Activated CD8-positive, alpha-beta T cell treated with anti-CD3 and anti-CD28 coated beads for 36 hours (primary cell): ENCODE measurements at regions of chr3 and their contacts with region 1.

Region 1: DNA sequence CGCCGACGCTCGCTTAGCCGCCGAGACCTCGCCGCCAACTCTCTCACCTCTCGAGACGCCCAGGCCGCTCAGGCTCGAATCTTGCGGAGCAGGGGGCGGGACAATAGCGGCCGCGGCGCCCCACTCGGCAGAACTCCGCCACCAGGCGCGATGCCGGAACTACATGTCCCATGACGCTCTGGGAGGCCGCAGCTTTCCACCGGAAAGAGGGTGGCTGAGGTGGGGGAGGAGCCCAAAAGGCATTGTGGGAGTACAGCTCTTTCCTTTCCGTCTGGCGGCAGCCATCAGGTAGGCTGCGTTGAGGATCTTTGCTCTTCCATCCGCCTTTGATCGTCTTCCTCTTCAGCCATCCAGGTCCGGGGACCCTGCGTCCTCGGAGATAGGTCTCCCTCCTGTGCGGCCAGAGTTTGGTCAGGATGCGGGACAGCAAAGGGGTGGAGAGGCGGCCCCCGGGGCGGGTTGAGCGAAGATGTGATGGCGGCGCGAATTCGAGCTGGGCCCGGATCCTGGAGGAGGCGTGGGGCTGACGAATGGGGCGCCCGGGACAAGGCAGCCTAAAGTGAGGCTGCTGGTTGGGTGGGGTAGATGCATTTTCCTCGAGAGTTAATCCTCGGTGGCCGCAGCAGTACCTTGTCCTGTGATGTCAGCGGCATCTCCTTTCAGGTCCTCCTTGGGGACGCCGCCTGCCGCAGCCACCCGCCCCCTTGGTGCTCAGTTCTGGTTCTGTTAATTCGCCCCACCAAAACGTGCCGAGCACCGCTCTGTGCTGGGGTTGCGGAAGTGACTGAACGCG is at the starts of genes NKIRAS1 and RPL15:
- DNase-seq: peak; percentile 98
- ATAC-seq: peak; percentile 96
- H3K4me3 Mint-ChIP-seq: peak within 1 kb of the TSS; percentile 99
- H3K27ac Mint-ChIP-seq: peak within 1 kb of the TSS; percentile 99
- H3K4me1 Mint-ChIP-seq: peaks cover 38% of the 10 kb centered on the region
- H3K27me3 Mint-ChIP-seq: peaks cover 2% of the 10 kb centered on the region
- CTCF ChIP-seq: peak; percentile 64
- total RNA-seq, gene NKIRAS1: 3.6 to 3.9 TPM
- total RNA-seq, gene RPL15: 2,671 to 2,747 TPM

Region 2: GRCh38 chr3:23805633-23806533 is 111.2 kb before region 1 on chr3 and contains the start of gene UBE2E1:
- CTCF ChIA-PET with region 1: no interaction called
- POLR2A ChIA-PET with region 1: interaction called, 37 read pairs
- intact Hi-C with region 1: loop called (anchors 10 kb)
- DNase-seq: peak; percentile 76
- ATAC-seq: peak; percentile 67
- H3K4me3 Mint-ChIP-seq: peak within 1 kb of the TSS; percentile 87
- H3K27ac Mint-ChIP-seq: peak within 1 kb of the TSS; percentile 94
- H3K4me1 Mint-ChIP-seq: peaks cover 43% of the 10 kb centered on the region
- H3K27me3 Mint-ChIP-seq: peaks cover 8% of the 10 kb centered on the region
- CTCF ChIP-seq: no peak
- total RNA-seq, gene UBE2E1: 79.0 to 80.3 TPM

Region 3: DNA sequence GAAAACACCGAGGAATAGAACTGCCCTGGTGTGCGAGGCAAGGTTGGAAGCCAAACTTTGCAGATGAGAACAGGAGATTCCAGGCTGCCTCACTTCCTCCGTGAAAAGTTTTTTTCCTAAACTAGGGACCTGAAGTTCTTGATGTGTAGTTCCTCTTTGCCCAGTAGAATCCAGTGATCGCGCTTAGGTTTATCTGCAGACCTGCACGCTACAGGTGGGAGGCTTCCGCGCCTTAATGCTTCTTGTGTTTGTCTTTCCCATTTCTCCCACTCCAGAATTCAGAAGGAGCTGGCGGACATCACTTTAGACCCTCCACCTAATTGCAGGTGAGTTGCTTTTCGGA is 105.9 kb before region 1 on chr3:
- CTCF ChIA-PET with region 1: no interaction called
- POLR2A ChIA-PET with region 1: interaction called, 37 read pairs
- intact Hi-C with region 1: loop called (anchors 10 kb)
- DNase-seq: no peak
- ATAC-seq: no peak
- H3K4me3 Mint-ChIP-seq: peak overlapping the region; percentile 84
- H3K27ac Mint-ChIP-seq: peak overlapping the region; percentile 95
- H3K4me1 Mint-ChIP-seq: peaks cover 61% of the 10 kb centered on the region
- H3K27me3 Mint-ChIP-seq: no peaks in the 10 kb centered on the region
- CTCF ChIP-seq: no peak

Region 4: GRCh38 chr3:23888617-23889228 is 28.4 kb before region 1 on chr3:
- CTCF ChIA-PET with region 1: interaction called, 3 read pairs
- POLR2A ChIA-PET with region 1: interaction called, 18 read pairs
- intact Hi-C with region 1: no loop called
- DNase-seq: no peak
- ATAC-seq: no peak
- H3K4me3 Mint-ChIP-seq: no peak overlapping the region
- H3K27ac Mint-ChIP-seq: no peak overlapping the region
- H3K4me1 Mint-ChIP-seq: no peaks in the 10 kb centered on the region
- H3K27me3 Mint-ChIP-seq: no peaks in the 10 kb centered on the region
- CTCF ChIP-seq: peak; percentile 73

Region 5: GRCh38 chr3:23899354-23899753 is 17.7 kb before region 1 on chr3:
- CTCF ChIA-PET with region 1: interaction called, 3 read pairs
- POLR2A ChIA-PET with region 1: interaction called, 12 read pairs
- intact Hi-C with region 1: no loop called
- DNase-seq: no peak
- ATAC-seq: no peak
- H3K4me3 Mint-ChIP-seq: no peak overlapping the region
- H3K27ac Mint-ChIP-seq: no peak overlapping the region
- H3K4me1 Mint-ChIP-seq: no peaks in the 10 kb centered on the region
- H3K27me3 Mint-ChIP-seq: no peaks in the 10 kb centered on the region
- CTCF ChIP-seq: no peak

Region 6: GRCh38 chr3:23938688-23939087 is 21.6 kb after region 1 on chr3:
- CTCF ChIA-PET with region 1: no interaction called
- POLR2A ChIA-PET with region 1: interaction called, 28 read pairs
- intact Hi-C with region 1: no loop called
- DNase-seq: no peak
- ATAC-seq: no peak
- H3K4me3 Mint-ChIP-seq: no peak overlapping the region
- H3K27ac Mint-ChIP-seq: no peak overlapping the region
- H3K4me1 Mint-ChIP-seq: no peaks in the 10 kb centered on the region
- H3K27me3 Mint-ChIP-seq: peaks cover 4% of the 10 kb centered on the region
- CTCF ChIP-seq: no peak

Region 7: DNA sequence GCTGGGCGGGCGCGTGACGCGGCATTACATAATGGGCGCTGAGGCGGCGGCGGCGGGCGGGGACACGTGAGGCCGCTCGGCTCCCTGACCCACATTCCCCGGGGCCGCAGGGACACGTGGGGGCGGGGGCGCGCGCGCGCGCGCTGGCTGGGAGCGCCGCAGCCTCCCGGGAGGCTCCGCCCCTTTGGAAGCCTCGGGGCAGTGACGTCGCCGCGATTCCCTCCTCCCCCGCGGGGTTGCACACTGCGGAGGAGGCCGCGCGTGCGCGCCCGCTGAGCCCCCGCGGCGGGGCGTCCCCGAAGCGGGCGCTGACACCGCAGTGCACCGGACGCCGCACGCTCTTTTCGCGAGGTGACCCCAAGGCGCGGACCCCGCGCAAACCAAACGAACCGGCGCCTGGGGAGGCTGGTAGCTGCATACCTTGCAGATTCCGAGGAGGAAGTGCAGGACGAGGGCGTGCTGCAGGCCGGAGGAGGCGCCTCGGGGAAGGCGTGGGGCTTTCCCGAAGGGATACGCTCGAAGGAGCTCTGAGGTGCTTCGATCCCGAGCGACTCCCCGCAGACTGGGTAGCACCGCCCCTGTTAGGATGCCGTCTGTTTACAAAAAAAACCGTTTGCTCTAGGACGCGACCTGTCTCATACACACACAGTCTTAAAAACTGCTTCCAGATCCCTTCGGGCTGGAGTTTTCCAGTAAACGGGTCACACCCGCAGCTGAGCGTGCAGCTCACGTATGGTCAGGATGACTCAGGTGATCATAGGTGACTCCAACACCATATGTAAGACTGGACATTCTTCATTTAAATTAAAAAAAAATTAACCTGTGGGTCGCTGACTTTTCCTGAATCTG is 29.0 kb after region 1 on chr3:
- CTCF ChIA-PET with region 1: no interaction called
- POLR2A ChIA-PET with region 1: interaction called, 53 read pairs
- intact Hi-C with region 1: loop called (anchors 2 kb)
- DNase-seq: peak; percentile 95
- ATAC-seq: peak; percentile 82
- H3K4me3 Mint-ChIP-seq: peak overlapping the region; percentile 84
- H3K27ac Mint-ChIP-seq: peak overlapping the region; percentile 93
- H3K4me1 Mint-ChIP-seq: peaks cover 40% of the 10 kb centered on the region
- H3K27me3 Mint-ChIP-seq: peaks cover 10% of the 10 kb centered on the region
- CTCF ChIP-seq: no peak

Region 8: GRCh38 chr3:24012589-24013269 is 95.6 kb after region 1 on chr3:
- CTCF ChIA-PET with region 1: no interaction called
- POLR2A ChIA-PET with region 1: no interaction called
- intact Hi-C with region 1: no loop called
- DNase-seq: no peak
- ATAC-seq: no peak
- H3K4me3 Mint-ChIP-seq: no peak overlapping the region
- H3K27ac Mint-ChIP-seq: no peak overlapping the region
- H3K4me1 Mint-ChIP-seq: no peaks in the 10 kb centered on the region
- H3K27me3 Mint-ChIP-seq: no peaks in the 10 kb centered on the region
- CTCF ChIP-seq: no peak